B cell (primary cell): ENCODE measurements at regions of chr17 and their contacts with region 1.

Region 1: DNA sequence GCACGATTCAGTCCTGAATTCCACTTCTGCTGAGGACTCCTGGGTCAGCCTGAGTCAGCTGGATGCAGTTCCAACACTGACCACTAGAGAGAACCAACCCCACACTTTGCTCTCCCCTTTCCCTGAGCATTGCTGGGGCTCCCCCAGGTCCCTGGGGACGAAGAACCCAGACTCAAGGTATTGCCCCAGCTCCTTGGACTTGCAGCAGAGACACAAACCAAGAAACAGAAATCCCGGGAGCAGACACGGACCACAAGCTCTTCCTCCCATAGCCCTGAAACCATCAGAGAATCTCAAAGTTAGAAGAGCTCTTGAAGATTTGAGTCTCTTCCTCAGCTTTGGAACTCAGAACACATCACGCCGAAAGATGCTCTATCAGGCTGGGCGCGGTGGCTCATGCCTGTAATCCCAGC is 678 bp upstream of the GH1 start:
- DNase-seq: peak; percentile 93
- ATAC-seq: peak; percentile 58
- H3K4me3 ChIP-seq: peak overlapping the region in 3 of 5 experiments; percentile 8 to 26 (median 19)
- H3K4me3 Mint-ChIP-seq: peak overlapping the region; percentile 87
- H3K27ac ChIP-seq: peak overlapping the region in 1 of 2 donors; percentile 18
- H3K27ac Mint-ChIP-seq: peak overlapping the region; percentile 86
- H3K4me1 ChIP-seq: peaks cover 68 to 83% of the 10 kb centered on the region in 2 donors
- H3K4me1 Mint-ChIP-seq: peaks cover 72% of the 10 kb centered on the region
- H3K27me3 ChIP-seq: no peaks in the 10 kb centered on the region
- H3K27me3 Mint-ChIP-seq: no peaks in the 10 kb centered on the region
- CTCF ChIP-seq: peak; percentile 88

Region 2: DNA sequence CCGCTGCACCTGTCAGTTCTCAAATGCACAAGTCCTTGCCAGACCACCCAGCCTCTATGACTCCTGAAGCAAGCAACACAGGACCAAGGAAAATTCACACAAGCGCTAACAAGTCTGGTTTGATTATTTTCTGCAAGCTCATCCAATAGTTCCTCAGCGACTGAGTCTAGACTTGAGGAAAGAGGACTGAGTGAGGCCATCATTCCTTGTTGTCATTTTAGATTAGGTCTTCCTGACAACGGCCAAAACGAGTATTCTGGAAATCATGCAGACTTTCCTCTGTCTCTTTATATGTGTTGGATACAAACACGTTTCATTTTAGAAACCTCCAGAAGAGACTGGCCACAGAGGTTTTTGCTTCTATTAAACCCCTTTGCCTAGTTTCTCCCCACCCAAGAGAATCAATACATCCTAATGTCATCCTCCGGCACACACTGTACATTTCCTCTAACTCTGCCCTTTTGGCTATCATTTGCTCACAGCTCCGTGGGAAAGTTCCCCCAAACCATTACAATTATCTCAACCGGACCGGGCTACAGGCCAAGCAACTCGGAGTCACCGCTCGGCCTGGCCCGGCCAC is 146.4 kb before region 1 on chr17:
- CTCF ChIA-PET with region 1: no interaction called
- POLR2A ChIA-PET with region 1: no interaction called
- intact Hi-C with region 1: no loop called
- DNase-seq: no peak
- ATAC-seq: no peak
- H3K4me3 ChIP-seq: peak overlapping the region; percentile 78 to 99 (median 89)
- H3K4me3 Mint-ChIP-seq: peak overlapping the region; percentile 98
- H3K27ac ChIP-seq: peak overlapping the region; percentile 78 to 94
- H3K27ac Mint-ChIP-seq: peak overlapping the region; percentile 99
- H3K4me1 ChIP-seq: peaks cover 28 to 34% of the 10 kb centered on the region in 2 donors
- H3K4me1 Mint-ChIP-seq: peaks cover 49% of the 10 kb centered on the region
- H3K27me3 ChIP-seq: no peaks in the 10 kb centered on the region
- H3K27me3 Mint-ChIP-seq: no peaks in the 10 kb centered on the region
- CTCF ChIP-seq: no peak

Region 3: DNA sequence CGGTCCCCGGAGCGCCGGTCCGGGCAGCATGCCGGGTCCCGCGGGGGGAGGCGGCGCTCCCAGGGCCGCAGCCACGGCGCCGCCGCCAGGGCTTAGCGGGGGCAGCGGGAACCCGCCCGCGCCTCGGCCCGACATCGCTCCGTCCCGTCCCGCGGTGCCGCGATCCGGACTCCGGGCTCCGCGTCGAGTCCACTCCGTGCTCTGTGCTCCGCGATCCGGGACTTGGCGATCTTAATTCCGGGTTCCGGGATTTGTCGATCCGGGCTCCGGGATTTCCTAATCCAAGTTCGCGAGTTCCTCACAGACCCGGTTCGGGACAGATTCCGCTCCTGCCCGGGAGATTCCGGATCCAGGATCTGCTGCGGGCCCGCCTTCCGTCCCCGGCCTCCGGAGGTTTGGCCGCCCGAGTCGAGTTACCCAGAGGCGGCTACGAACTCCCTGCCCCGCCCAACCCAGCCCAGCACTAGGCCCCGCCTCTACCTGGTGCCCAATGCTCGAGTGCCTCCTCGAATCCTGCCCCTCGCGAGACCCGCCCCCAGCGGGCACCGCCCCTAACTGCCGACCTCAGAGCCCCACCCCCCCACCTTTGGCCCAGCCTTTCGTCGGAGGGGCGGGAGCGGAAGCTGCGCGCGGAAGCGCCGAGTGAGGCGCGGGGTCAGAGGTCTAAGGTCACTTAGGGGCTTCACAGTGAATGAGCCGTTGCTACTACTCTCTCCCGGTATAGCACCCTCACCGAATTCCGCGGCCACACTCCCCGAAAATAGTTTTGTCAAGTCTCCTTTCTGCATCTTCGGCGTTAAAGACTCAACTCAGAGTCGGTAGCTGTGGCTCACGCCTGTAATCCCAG is 76.6 kb before region 1 on chr17 and contains the start of gene SMARCD2:
- CTCF ChIA-PET with region 1: no interaction called
- POLR2A ChIA-PET with region 1: no interaction called
- intact Hi-C with region 1: no loop called
- DNase-seq: peak; percentile 99
- ATAC-seq: peak; percentile 93
- H3K4me3 ChIP-seq: peak within 1 kb of the TSS; percentile 65 to 92 (median 89)
- H3K4me3 Mint-ChIP-seq: peak within 1 kb of the TSS; percentile 94
- H3K27ac ChIP-seq: peak within 1 kb of the TSS; percentile 90 to 92
- H3K27ac Mint-ChIP-seq: peak within 1 kb of the TSS; percentile 94
- H3K4me1 ChIP-seq: peaks cover 35 to 51% of the 10 kb centered on the region in 2 donors
- H3K4me1 Mint-ChIP-seq: peaks cover 43% of the 10 kb centered on the region
- H3K27me3 ChIP-seq: no peaks in the 10 kb centered on the region
- H3K27me3 Mint-ChIP-seq: no peaks in the 10 kb centered on the region
- CTCF ChIP-seq: no peak
- total RNA-seq, gene SMARCD2: 124 and 125 TPM in 2 replicates

Region 4: GRCh38 chr17:63855185-63855584 is 64.1 kb before region 1 on chr17:
- CTCF ChIA-PET with region 1: no interaction called
- POLR2A ChIA-PET with region 1: no interaction called
- intact Hi-C with region 1: no loop called
- DNase-seq: no peak
- ATAC-seq: no peak
- H3K4me3 ChIP-seq: no peak overlapping the region
- H3K4me3 Mint-ChIP-seq: no peak overlapping the region
- H3K27ac ChIP-seq: no peak overlapping the region
- H3K27ac Mint-ChIP-seq: no peak overlapping the region
- H3K4me1 ChIP-seq: no peaks in the 10 kb centered on the region
- H3K4me1 Mint-ChIP-seq: no peaks in the 10 kb centered on the region
- H3K27me3 ChIP-seq: peaks cover 0 to 5% (median 2%) of the 10 kb centered on the region in 4 experiments
- H3K27me3 Mint-ChIP-seq: peaks cover 8% of the 10 kb centered on the region
- CTCF ChIP-seq: no peak

Region 5: DNA sequence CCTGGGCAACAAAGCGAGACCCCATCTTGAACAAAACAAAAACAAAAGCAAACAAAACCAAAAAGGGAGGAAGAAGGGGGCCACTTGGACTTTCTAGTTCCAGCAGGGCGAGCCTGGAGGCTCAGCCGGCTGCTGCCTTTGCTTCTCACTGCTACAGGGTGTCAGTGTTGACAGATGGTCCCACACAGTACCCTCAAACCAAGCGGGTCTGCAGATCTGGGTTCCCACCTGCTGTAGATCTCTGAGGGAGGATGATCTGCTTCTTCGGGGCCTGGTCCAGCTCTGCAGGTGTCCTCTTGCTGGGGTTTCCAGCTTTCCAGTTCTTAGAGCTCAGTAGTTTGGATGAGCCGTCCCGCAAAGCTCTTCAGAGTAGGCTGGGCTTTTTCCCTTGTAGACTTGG is 15.0 kb before region 1 on chr17:
- CTCF ChIA-PET with region 1: interaction called, 16 read pairs
- POLR2A ChIA-PET with region 1: no interaction called
- intact Hi-C with region 1: no loop called
- DNase-seq: no peak
- ATAC-seq: no peak
- H3K4me3 ChIP-seq: no peak overlapping the region
- H3K4me3 Mint-ChIP-seq: no peak overlapping the region
- H3K27ac ChIP-seq: no peak overlapping the region
- H3K27ac Mint-ChIP-seq: no peak overlapping the region
- H3K4me1 ChIP-seq: no peaks in the 10 kb centered on the region
- H3K4me1 Mint-ChIP-seq: peaks cover 4% of the 10 kb centered on the region
- H3K27me3 ChIP-seq: no peaks in the 10 kb centered on the region
- H3K27me3 Mint-ChIP-seq: peaks cover 8% of the 10 kb centered on the region
- CTCF ChIP-seq: no peak

Region 6: GRCh38 chr17:63939884-63940283 is 20.6 kb after region 1 on chr17:
- CTCF ChIA-PET with region 1: interaction called, 834 read pairs
- POLR2A ChIA-PET with region 1: interaction called, 12 read pairs
- intact Hi-C with region 1: no loop called
- DNase-seq: no peak
- ATAC-seq: no peak
- H3K4me3 ChIP-seq: no peak overlapping the region
- H3K4me3 Mint-ChIP-seq: no peak overlapping the region
- H3K27ac ChIP-seq: no peak overlapping the region
- H3K27ac Mint-ChIP-seq: peak overlapping the region; percentile 62
- H3K4me1 ChIP-seq: peaks cover 36 to 55% of the 10 kb centered on the region in 2 donors
- H3K4me1 Mint-ChIP-seq: peaks cover 62% of the 10 kb centered on the region
- H3K27me3 ChIP-seq: no peaks in the 10 kb centered on the region
- H3K27me3 Mint-ChIP-seq: no peaks in the 10 kb centered on the region
- CTCF ChIP-seq: no peak

Region 7: GRCh38 chr17:63961355-63962212 is 42.3 kb after region 1 on chr17:
- CTCF ChIA-PET with region 1: interaction called, 504 read pairs
- POLR2A ChIA-PET with region 1: no interaction called
- intact Hi-C with region 1: no loop called
- DNase-seq: peak; percentile 74
- ATAC-seq: peak; percentile 85
- H3K4me3 ChIP-seq: peak overlapping the region in 1 of 5 experiments; percentile 1
- H3K4me3 Mint-ChIP-seq: peak overlapping the region; percentile 70
- H3K27ac ChIP-seq: no peak overlapping the region
- H3K27ac Mint-ChIP-seq: no peak overlapping the region
- H3K4me1 ChIP-seq: peaks cover 9 to 18% of the 10 kb centered on the region in 2 donors
- H3K4me1 Mint-ChIP-seq: peaks cover 16% of the 10 kb centered on the region
- H3K27me3 ChIP-seq: no peaks in the 10 kb centered on the region
- H3K27me3 Mint-ChIP-seq: no peaks in the 10 kb centered on the region
- CTCF ChIP-seq: no peak

Region 8: DNA sequence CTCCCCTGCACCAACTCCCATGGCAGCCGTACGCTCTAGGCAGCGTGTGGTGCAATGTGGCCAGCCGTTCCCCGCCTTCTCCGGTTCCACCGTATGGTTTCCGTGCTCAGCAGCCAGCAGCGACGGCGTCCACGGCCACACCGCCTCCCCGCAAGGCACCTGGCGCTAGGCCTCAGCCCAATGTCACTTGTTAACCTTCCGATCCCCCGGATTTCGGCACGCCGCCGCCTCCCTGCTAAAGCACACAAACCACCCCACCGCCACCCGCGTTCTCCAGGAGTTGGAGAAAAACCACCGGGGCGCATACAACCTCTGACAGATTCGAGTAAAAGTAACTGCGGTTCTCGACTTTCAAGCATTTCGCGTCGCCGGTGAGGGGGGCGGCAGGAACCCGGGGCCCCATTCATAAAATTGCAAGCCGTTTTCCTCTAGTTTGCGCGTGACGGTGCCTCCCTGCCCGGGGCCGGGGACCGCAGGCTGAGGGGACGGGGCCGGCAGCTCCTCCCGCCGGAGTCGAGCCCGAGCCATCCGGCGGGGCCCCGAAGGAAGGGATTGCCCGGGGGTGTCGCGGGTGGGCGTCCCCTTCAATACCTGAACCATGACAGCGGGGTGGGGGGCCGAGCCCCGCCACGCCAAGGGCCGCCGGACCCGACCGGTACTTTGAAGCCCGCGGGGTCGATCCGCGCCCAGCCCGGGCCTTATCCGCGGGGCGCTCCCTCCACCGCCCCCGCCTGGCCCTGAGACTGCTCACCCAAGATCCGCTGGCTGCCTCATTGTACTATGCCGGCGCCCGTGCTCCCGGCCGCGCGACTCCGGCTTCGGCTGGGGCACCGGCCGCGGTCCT is 343.3 kb after region 1 on chr17 and contains the start of gene TEX2:
- CTCF ChIA-PET with region 1: no interaction called
- POLR2A ChIA-PET with region 1: no interaction called
- intact Hi-C with region 1: loop called (anchors 5 kb)
- DNase-seq: peak; percentile 67
- ATAC-seq: peak; percentile 25
- H3K4me3 ChIP-seq: peak within 1 kb of the TSS; percentile 54 to 89 (median 74)
- H3K4me3 Mint-ChIP-seq: peak within 1 kb of the TSS; percentile 92
- H3K27ac ChIP-seq: peak within 1 kb of the TSS; percentile 48 to 68
- H3K27ac Mint-ChIP-seq: peak within 1 kb of the TSS; percentile 90
- H3K4me1 ChIP-seq: peaks cover 10 to 22% of the 10 kb centered on the region in 2 donors
- H3K4me1 Mint-ChIP-seq: peaks cover 28% of the 10 kb centered on the region
- H3K27me3 ChIP-seq: peaks cover 0 to 6% (median 0%) of the 10 kb centered on the region in 4 experiments
- H3K27me3 Mint-ChIP-seq: peaks cover 6% of the 10 kb centered on the region
- CTCF ChIP-seq: no peak
- total RNA-seq, gene TEX2: 6.9 and 7.6 TPM in 2 replicates